ENCODE measurements at regions of chr1 and their contacts with region 1.

Region 1: GRCh38 chr1:232635778-232636356 is 5.9 kb upstream of the SIPA1L2 start:
- DNase-seq: no peak
- H3K4me3 ChIP-seq: no peak overlapping the region
- H3K27ac ChIP-seq: no peak overlapping the region
- H3K4me1 ChIP-seq: peaks cover 15 to 19% of the 10 kb centered on the region in 2 donors
- H3K27me3 ChIP-seq: no peaks in the 10 kb centered on the region
- CTCF ChIP-seq: peak; percentile 40 to 79 (median 68)
- POLR2A ChIP-seq: no peak

Region 2: GRCh38 chr1:232192829-232193783 is 442.8 kb before region 1 on chr1:
- intact Hi-C with region 1: no loop called
- DNase-seq: no peak
- H3K4me3 ChIP-seq: no peak overlapping the region
- H3K27ac ChIP-seq: no peak overlapping the region
- H3K4me1 ChIP-seq: no peaks in the 10 kb centered on the region
- H3K27me3 ChIP-seq: no peaks in the 10 kb centered on the region
- CTCF ChIP-seq: no peak
- POLR2A ChIP-seq: no peak

Region 3: GRCh38 chr1:233240829-233241682 is 605.2 kb after region 1 on chr1:
- intact Hi-C with region 1: loop called (anchors 5 kb)
- DNase-seq: peak; percentile 51 to 63
- H3K4me3 ChIP-seq: no peak overlapping the region
- H3K27ac ChIP-seq: no peak overlapping the region
- H3K4me1 ChIP-seq: no peaks in the 10 kb centered on the region
- H3K27me3 ChIP-seq: no peaks in the 10 kb centered on the region
- CTCF ChIP-seq: peak; percentile 48 to 76 (median 62)
- POLR2A ChIP-seq: no peak